ENCODE measurements at regions of chr16 and their contacts with region 1.

Region 1: GRCh38 chr16:67521095-67521804 is 7.4 kb upstream of the RIPOR1 start:
- DNase-seq: peak; percentile 97
- H3K4me3 ChIP-seq: peak overlapping the region in 2 of 3 experiments; percentile 30 to 45
- H3K27ac ChIP-seq: peak overlapping the region; percentile 89
- H3K4me1 ChIP-seq: peaks cover 11% of the 10 kb centered on the region
- H3K27me3 ChIP-seq: no peaks in the 10 kb centered on the region
- CTCF ChIP-seq: peak; percentile 83 to 100
- POLR2A ChIP-seq: peak; percentile 68

Region 2: GRCh38 chr16:67480833-67481560 is 40.3 kb before region 1 on chr16 and contains the start of gene ATP6V0D1:
- CTCF ChIA-PET with region 1: interaction called, 133 read pairs
- POLR2A ChIA-PET with region 1: no interaction called
- dilution Hi-C with region 1: no loop called
- intact Hi-C with region 1: no loop called
- DNase-seq: peak; percentile 99
- H3K4me3 ChIP-seq: peak within 1 kb of the TSS; percentile 69 to 80 (median 77)
- H3K27ac ChIP-seq: peak within 1 kb of the TSS; percentile 73
- H3K4me1 ChIP-seq: peaks cover 22% of the 10 kb centered on the region
- H3K27me3 ChIP-seq: no peaks in the 10 kb centered on the region
- CTCF ChIP-seq: peak; percentile 96
- POLR2A ChIP-seq: peak; percentile 74
- total RNA-seq, gene ATP6V0D1: 77.1 and 82.8 TPM in 2 replicates

Region 3: DNA sequence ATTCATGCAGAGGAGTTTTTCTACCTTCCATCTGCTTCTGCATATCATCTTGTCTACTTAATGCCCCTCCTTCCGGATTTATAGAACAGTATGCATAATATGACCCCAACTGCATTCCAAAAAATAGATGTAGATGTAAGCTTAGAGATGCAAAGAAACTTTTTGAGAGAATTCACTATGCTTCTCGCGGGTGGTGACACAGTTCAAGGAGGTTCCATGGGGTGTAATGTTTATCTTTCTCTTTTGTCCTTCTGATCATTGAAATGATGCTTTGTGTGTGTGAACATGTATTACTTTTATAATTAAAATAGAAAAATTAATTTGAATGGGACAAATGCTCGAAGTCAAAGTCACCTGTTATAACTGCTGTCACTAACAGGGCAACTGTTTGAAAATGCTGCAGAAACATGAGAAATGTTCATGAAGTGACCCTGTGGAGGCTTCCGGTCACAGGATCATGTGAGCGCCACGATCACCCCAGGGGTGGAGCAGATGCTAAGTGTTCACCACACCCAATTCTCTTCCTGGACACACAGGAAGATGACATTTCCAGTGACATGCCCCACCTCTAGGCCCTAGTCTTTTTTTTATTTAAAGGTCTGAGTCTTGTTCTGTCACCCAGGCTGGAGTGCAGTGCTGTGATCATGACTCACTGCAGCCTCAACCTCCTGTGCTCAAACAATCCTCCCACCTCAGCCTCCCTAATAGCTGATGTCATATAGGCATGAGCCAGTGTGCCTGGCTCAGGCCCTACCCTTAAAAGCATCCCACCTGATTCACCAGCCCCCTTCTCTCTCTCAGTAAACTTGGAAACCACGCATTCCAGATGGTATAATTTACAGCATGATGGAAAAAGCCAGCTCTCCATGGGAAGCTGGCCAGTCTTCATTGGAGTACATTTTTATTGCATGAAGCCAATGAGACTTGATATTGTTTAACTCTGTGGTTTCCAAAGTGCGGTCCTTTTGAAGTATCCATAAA is 16.9 kb before region 1 on chr16:
- CTCF ChIA-PET with region 1: interaction called, 16 read pairs
- POLR2A ChIA-PET with region 1: no interaction called
- dilution Hi-C with region 1: no loop called
- intact Hi-C with region 1: no loop called
- DNase-seq: no peak
- H3K4me3 ChIP-seq: no peak overlapping the region
- H3K27ac ChIP-seq: no peak overlapping the region
- H3K4me1 ChIP-seq: no peaks in the 10 kb centered on the region
- H3K27me3 ChIP-seq: no peaks in the 10 kb centered on the region
- CTCF ChIP-seq: no peak
- POLR2A ChIP-seq: no peak

Region 4: DNA sequence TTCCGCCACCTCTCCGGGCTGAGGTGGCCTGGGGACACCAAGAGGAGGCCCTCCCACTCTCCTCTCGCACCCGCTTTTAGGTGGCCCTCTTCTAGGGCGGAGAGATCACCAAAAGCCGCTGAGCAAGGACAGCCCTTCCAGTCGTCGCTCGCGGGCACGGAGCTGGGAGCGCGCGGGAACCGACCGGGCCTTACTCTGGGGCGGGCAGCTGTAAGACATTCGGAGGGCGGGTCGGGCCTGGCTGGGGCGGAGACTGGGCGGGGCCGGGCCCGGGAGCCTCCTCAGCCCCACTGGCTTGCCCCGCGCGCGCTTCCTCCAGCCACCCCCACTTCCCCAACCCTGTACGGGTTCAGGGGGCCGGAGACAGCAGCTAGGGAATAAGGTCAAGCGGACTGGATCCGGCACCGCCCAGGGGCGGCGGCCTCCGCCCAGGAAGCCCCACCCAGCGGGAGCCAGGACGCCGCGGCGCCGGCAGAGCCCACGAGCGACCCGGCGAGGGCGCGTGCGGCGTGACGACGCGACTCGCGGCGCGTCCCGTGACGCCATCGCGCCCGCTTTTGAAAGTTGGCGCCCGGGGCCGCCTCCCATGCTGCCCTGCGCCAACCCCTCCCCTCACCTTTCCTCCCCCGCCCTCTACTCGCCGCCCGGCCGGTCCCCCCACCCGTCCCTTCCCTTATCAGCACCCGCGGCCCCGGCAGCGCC is 40.7 kb after region 1 on chr16:
- CTCF ChIA-PET with region 1: interaction called, 45 read pairs
- POLR2A ChIA-PET with region 1: interaction called, 3 read pairs
- dilution Hi-C with region 1: no loop called
- intact Hi-C with region 1: loop called (anchors 1 kb)
- DNase-seq: peak; percentile 96
- H3K4me3 ChIP-seq: peak overlapping the region; percentile 17 to 70 (median 64)
- H3K27ac ChIP-seq: peak overlapping the region; percentile 84
- H3K4me1 ChIP-seq: peaks cover 18% of the 10 kb centered on the region
- H3K27me3 ChIP-seq: no peaks in the 10 kb centered on the region
- CTCF ChIP-seq: no peak
- POLR2A ChIP-seq: peak; percentile 81

Region 5: GRCh38 chr16:67652578-67653127 is 131.4 kb after region 1 on chr16:
- CTCF ChIA-PET with region 1: interaction called, 141 read pairs
- POLR2A ChIA-PET with region 1: no interaction called
- dilution Hi-C with region 1: no loop called
- intact Hi-C with region 1: no loop called
- DNase-seq: no peak
- H3K4me3 ChIP-seq: peak overlapping the region in 2 of 3 experiments; percentile 24 to 31
- H3K27ac ChIP-seq: no peak overlapping the region
- H3K4me1 ChIP-seq: peaks cover 5% of the 10 kb centered on the region
- H3K27me3 ChIP-seq: peaks cover 41 to 47% of the 10 kb centered on the region in 2 experiments
- CTCF ChIP-seq: no peak
- POLR2A ChIP-seq: no peak

Region 6: DNA sequence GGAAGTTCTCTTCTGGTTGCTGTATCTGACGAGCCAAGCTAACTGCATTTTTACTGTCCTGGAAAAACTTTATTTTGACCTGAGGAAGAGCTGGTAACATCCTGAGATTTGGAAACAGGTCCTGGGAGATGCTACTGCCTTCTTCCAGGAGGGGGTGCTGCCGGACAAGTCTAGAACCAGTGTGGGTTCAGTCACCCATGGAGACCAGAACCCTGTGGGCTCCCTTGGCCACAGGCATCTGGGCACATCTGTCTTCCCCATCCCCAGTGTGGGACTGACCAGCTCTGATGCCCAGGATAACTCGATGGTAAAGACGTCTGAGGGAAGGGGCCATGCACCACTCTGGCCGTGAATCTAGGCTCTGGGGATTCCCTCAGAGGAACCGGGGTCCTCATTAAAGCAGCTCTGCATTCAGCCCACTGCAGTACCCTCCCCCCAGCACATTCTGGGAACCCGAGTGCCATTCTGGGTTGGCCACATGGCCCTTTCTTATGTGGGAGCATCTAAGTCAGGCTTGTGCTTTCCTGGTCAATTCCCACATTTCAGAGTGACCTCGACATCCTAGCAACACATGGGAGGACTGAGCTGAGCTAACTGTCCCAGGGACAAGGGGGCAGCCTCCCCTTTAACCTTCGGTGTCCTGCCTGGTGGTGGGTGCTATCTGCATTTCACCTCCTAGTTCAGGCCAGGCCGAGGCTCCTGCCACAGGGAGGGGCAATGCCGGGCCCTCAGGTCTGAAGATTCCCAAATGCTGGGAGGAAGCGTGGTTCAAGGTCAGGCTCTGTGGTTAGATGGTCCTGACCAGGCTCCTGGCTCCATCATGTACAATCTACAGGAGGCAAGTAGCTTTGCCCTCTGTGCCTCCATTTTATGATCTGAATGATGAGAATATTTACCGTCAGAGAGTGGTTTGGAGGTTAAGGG is 151.8 kb after region 1 on chr16:
- CTCF ChIA-PET with region 1: interaction called, 163 read pairs
- POLR2A ChIA-PET with region 1: interaction called, 4 read pairs
- dilution Hi-C with region 1: no loop called
- intact Hi-C with region 1: loop called (anchors 1 kb)
- DNase-seq: peak; percentile 79
- H3K4me3 ChIP-seq: no peak overlapping the region
- H3K27ac ChIP-seq: peak overlapping the region; percentile 73
- H3K4me1 ChIP-seq: peaks cover 26% of the 10 kb centered on the region
- H3K27me3 ChIP-seq: no peaks in the 10 kb centered on the region
- CTCF ChIP-seq: peak; percentile 80 to 82
- POLR2A ChIP-seq: peak; percentile 22

Region 7: DNA sequence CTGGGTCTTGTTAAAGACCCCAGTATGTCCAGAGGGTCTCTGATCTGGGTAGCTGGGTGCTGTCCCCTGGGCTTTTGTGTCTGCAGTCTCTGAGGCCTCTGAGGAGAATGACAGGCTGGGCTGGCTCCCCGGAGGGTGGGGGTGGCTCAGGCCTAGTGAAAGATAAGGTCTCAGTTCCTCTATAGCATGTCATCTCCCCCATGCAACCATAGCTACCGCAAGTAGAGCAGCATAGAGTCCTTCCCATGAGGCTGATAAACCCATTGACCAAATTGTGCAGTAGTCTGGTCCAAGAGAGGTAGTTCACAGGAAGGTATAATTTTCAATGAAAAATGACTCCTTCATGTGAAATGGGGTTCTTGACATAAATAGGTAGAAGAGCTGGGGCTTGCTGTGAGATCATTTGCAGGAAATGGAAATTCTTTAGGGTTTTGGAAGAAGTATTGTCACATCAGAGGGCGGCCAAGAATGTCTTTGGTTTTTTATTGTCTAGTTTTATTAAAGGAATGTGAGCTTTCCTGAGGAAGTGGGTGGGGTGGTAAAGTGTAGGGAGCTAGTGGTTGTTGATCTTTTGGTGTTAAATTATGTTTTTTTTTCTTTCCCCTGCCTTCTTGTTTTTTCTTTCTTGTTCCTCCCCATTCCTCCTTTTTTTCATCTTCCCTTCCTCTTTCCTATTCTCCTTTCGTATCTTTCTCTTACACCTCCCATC is 768.5 kb after region 1 on chr16:
- CTCF ChIA-PET with region 1: no interaction called
- POLR2A ChIA-PET with region 1: no interaction called
- dilution Hi-C with region 1: no loop called
- intact Hi-C with region 1: no loop called
- DNase-seq: peak; percentile 76
- H3K4me3 ChIP-seq: no peak overlapping the region
- H3K27ac ChIP-seq: peak overlapping the region; percentile 88
- H3K4me1 ChIP-seq: peaks cover 65% of the 10 kb centered on the region
- H3K27me3 ChIP-seq: no peaks in the 10 kb centered on the region
- CTCF ChIP-seq: no peak
- POLR2A ChIP-seq: peak; percentile 78